Psoas muscle (tissue), 8 donors: ENCODE measurements at regions of chr1 and their contacts with region 1.

Region 1: GRCh38 chr1:116948046-116948445 is 38.3 kb downstream of the PTGFRN start:
- DNase-seq: peak in 1 of 2 donors; percentile 23
- ATAC-seq: peak in 1 of 4 donors; percentile 18
- H3K4me3 ChIP-seq: no peak overlapping the region
- H3K27ac ChIP-seq: no peak overlapping the region
- H3K4me1 ChIP-seq: no peaks in the 10 kb centered on the region
- H3K27me3 ChIP-seq: peaks cover 0 to 6% (median 5%) of the 10 kb centered on the region in 3 donors
- CTCF ChIP-seq: no peak

Region 2: DNA sequence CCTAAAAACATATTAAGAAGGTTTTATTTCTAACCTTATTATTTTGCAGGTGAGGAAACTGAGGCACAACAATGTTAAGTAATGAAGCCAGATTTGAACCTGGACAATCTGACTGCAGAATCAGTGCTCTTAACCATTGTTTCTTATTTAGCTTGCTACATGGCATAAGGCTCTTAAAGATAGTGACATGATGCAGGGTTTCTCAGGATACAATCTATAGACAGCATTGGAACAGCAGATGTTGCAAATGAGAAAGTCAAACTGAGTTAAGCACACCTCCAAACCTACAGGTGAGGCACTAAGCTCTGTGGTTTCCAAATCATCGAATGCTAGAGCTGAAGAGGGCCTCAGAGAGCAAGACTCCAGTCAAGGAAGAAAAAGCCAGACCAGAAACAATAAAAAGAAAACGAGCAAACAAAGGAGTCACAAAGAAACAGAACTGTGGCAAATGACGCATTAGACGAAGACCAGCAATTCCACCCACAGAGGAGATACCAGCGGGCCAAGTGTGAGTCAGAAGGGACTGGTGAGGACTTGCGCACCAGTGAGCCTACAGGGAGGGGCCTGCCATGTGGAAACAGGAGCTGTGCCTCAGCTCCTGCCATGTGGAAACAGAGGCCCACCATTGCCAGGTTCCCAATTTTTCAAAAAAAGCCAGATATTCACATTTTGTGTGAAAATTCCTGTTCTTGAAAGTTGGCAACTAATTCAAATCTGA is 391.6 kb before region 1 on chr1:
- intact Hi-C with region 1: no loop called
- DNase-seq: peak in 1 of 2 donors; percentile 73
- ATAC-seq: peak; percentile 34 to 74 (median 64)
- H3K4me3 ChIP-seq: no peak overlapping the region
- H3K27ac ChIP-seq: no peak overlapping the region
- H3K4me1 ChIP-seq: peaks cover 6% of the 10 kb centered on the region
- H3K27me3 ChIP-seq: no peaks in the 10 kb centered on the region
- CTCF ChIP-seq: no peak

Region 3: DNA sequence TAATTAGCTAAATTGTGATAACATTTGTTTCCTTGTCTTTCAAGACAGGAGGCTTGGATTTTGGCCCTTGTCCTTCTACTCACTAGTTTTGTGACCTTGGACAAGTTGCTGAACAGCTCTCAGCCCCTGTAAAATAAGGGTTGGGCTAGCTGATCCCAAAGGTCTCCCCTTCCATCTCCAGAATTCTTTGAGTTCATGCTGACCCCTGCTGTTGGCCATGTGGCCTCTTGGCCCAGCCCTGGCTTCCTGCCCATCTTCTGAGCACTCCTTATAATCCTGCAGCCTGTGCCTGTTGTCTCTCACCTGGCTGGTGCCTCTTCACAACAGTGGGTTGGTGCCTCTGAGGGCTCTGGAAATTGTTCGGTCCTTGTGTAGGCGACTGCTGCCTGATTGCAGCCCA is 28.2 kb before region 1 on chr1:
- intact Hi-C with region 1: loop called in 1 of 2 experiments (anchors 1 kb)
- DNase-seq: no peak
- ATAC-seq: no peak
- H3K4me3 ChIP-seq: no peak overlapping the region
- H3K27ac ChIP-seq: no peak overlapping the region
- H3K4me1 ChIP-seq: no peaks in the 10 kb centered on the region
- H3K27me3 ChIP-seq: peaks cover 0 to 26% (median 2%) of the 10 kb centered on the region in 3 donors
- CTCF ChIP-seq: no peak